ENCODE measurements at regions of chr10 and their contacts with region 1.

Region 1: DNA sequence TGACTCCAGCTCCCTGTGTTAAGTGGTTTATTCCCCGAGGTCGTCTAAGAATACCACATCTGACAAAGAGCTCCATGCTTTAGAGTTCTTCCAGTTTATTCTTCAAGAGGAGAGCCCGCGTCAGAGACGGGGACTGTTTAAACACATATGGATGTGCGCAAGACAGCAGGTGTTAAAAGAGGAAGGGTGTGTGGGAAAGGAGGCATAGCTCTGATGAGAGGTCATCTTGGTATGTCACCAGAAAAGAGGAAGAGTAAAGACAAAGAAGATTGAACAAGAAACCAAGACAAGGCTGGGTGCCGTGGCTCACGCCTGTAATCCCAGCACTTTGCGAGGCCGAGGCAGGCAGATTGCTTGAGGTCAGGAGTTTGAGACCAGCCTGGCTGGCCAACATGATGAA is 258.7 kb downstream of the CCDC3 start:
- DNase-seq: no peak
- ATAC-seq: no peak
- H3K4me3 ChIP-seq: no peak overlapping the region
- H3K27ac ChIP-seq: no peak overlapping the region
- H3K4me1 ChIP-seq: no peaks in the 10 kb centered on the region
- H3K27me3 ChIP-seq: no peaks in the 10 kb centered on the region
- CTCF ChIP-seq: no peak

Region 2: DNA sequence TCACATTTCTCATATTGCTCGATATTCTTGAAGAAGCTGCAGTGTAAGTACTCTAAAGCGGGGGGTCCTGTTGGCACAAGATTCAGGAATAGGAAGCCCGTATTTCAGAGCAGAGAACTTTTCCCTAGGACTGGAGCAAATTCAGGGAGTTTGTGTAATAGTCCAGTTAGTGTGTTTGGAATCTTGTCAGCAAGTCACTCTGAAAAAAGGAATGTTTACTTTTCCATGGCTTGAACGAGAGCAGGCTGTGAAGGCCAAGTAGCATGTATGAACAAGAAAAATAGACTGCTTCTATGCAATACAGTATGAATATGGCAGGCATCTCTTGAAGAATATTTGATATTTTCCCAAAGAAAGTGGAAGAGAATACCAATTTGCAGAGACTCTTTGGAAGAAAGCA is 507.0 kb before region 1 on chr10:
- CTCF ChIA-PET with region 1: interaction called, 17 read pairs
- POLR2A ChIA-PET with region 1: no interaction called
- in situ Hi-C with region 1: no loop called
- intact Hi-C with region 1: no loop called
- DNase-seq: no peak
- ATAC-seq: no peak
- H3K4me3 ChIP-seq: no peak overlapping the region
- H3K27ac ChIP-seq: no peak overlapping the region
- H3K4me1 ChIP-seq: no peaks in the 10 kb centered on the region
- H3K27me3 ChIP-seq: no peaks in the 10 kb centered on the region
- CTCF ChIP-seq: no peak

Region 3: DNA sequence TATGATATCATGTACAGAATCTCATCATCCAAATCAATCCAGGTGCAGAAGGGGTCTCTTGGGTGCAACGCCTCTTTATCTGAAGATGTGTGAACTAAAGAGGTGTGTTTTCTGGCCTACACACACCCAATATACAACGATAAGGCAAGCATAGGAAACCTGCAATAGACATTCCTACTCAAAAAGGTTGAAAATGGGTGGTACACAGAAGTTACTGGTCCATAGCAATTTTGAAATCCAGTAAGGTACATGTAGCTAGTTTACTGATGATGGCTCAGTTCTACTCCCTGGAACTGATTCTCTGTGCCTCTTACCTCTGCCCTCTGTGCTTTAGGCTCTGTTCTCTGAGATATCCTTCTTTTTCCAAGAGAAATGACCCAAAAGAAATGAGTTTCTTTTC is 281.0 kb after region 1 on chr10:
- CTCF ChIA-PET with region 1: no interaction called
- POLR2A ChIA-PET with region 1: no interaction called
- in situ Hi-C with region 1: no loop called
- intact Hi-C with region 1: no loop called
- DNase-seq: no peak
- ATAC-seq: no peak
- H3K4me3 ChIP-seq: no peak overlapping the region
- H3K27ac ChIP-seq: no peak overlapping the region
- H3K4me1 ChIP-seq: no peaks in the 10 kb centered on the region
- H3K27me3 ChIP-seq: no peaks in the 10 kb centered on the region; the same call in 1 of the 2 replicates
- CTCF ChIP-seq: no peak